Sigmoid colon (tissue), 7 donors: ENCODE measurements at regions of chr10 and their contacts with region 1.

Region 1: GRCh38 chr10:75099952-75100763 is 11.3 kb upstream of the SAMD8 start:
- DNase-seq: peak; percentile 88
- H3K4me3 ChIP-seq: no peak overlapping the region
- H3K27ac ChIP-seq: no peak overlapping the region
- H3K4me1 ChIP-seq: peaks cover 0 to 8% (median 5%) of the 10 kb centered on the region in 4 donors
- H3K27me3 ChIP-seq: no peaks in the 10 kb centered on the region
- CTCF ChIP-seq: peak; percentile 85 to 99 (median 97)
- EP300 ChIP-seq: no peak
- POLR2A ChIP-seq: no peak

Region 2: DNA sequence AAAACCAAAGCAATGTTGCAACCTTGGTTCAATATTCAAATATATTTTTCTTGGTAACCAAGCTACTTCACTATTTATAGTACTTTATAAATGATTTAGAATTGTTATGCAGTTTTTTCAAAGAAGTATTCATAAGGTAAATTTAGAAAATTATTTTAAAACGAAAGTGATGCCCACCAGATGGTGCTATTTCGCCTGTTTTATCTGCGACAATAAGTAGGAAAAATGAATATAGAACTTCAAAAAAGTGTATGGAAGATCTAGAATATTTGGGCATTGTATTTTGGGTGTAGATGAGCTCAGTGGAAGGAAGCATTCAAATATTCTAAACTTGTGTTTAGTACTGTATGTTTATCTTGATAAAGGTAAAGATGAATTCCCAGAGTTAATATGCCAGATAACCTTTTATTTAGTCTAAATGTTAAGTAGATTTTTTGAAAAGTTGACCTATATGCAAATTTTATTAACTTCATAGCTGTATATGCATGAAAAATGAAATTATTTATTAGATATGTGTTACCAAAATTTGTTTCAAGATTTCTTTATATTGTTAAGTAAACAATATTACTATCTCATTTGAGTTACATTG is 856.0 kb before region 1 on chr10:
- intact Hi-C with region 1: loop called (anchors 2 kb)
- DNase-seq: no peak
- H3K4me3 ChIP-seq: no peak overlapping the region
- H3K27ac ChIP-seq: no peak overlapping the region
- H3K4me1 ChIP-seq: no peaks in the 10 kb centered on the region
- H3K27me3 ChIP-seq: no peaks in the 10 kb centered on the region
- CTCF ChIP-seq: peak in 2 of 4 experiments; percentile 27 to 46
- EP300 ChIP-seq: no peak
- POLR2A ChIP-seq: no peak

Region 3: GRCh38 chr10:74262856-74263255 is 837.3 kb before region 1 on chr10:
- intact Hi-C with region 1: loop called (anchors 1 kb)
- DNase-seq: no peak
- H3K4me3 ChIP-seq: no peak overlapping the region
- H3K27ac ChIP-seq: no peak overlapping the region
- H3K4me1 ChIP-seq: peaks cover 0 to 5% (median 2%) of the 10 kb centered on the region in 4 donors
- H3K27me3 ChIP-seq: no peaks in the 10 kb centered on the region
- CTCF ChIP-seq: no peak
- EP300 ChIP-seq: no peak
- POLR2A ChIP-seq: no peak

Region 4: DNA sequence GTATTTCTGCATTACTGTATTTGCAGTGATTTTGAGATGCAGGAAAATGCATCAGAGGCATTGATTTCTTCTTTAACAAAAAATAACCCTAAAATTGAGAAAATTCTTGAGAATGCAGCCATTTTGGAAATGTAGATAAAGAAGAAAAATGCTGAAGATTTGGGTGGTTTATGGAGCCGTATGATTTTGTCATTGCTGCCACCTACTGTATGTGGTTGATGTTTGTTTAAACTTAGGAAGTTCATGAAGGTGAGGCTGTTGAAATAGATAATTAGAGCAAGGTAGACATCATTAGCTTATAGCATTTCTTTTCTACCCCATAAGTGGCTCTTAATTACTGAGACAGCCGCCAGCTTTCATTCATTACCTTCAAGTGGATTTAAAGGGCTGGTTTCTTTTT is 80.8 kb before region 1 on chr10:
- intact Hi-C with region 1: loop called (anchors 5 kb)
- DNase-seq: no peak
- H3K4me3 ChIP-seq: no peak overlapping the region
- H3K27ac ChIP-seq: no peak overlapping the region
- H3K4me1 ChIP-seq: peaks cover 0 to 20% (median 14%) of the 10 kb centered on the region in 4 donors
- H3K27me3 ChIP-seq: no peaks in the 10 kb centered on the region
- CTCF ChIP-seq: peak in 2 of 4 experiments; percentile 19 to 20
- EP300 ChIP-seq: no peak
- POLR2A ChIP-seq: no peak